ENCODE measurements at regions of chr1 and their contacts with region 1.

Region 1: GRCh38 chr1:155934097-155934935 is at the start of gene KHDC4:
- DNase-seq: peak; percentile 99
- ATAC-seq: peak; percentile 92
- H3K4me3 ChIP-seq: peak within 1 kb of the TSS; percentile 99
- H3K27ac ChIP-seq: peak within 1 kb of the TSS; percentile 87
- H3K4me1 ChIP-seq: peaks cover 13% of the 10 kb centered on the region
- H3K27me3 ChIP-seq: no peaks in the 10 kb centered on the region
- CTCF ChIP-seq: 0 out of 6 replicates have a peak, but pooled peaks of 1 of the 3 experiments have one; percentile 15
- EP300 ChIP-seq: no peak
- POLR2A ChIP-seq: peak; percentile 100
- RAD21 ChIP-seq: 0 out of 2 replicates have a peak, but pooled peaks have one; percentile 8
- polyA plus RNA-seq, gene KHDC4: 11.7 to 15.1 TPM

Region 2: GRCh38 chr1:155946633-155947219 is 12.4 kb after region 1 on chr1:
- CTCF ChIA-PET with region 1: interaction called, 12 read pairs
- POLR2A ChIA-PET with region 1: interaction called, 28 read pairs
- RAD21 ChIA-PET with region 1: interaction called, 10 read pairs
- SMC1A ChIA-PET with region 1: interaction called, 10 read pairs
- in situ Hi-C with region 1: no loop called
- intact Hi-C with region 1: no loop called
- DNase-seq: no peak
- ATAC-seq: peak; percentile 49
- H3K4me3 ChIP-seq: peak overlapping the region; percentile 12
- H3K27ac ChIP-seq: peak overlapping the region; percentile 79
- H3K4me1 ChIP-seq: peaks cover 50% of the 10 kb centered on the region
- H3K27me3 ChIP-seq: no peaks in the 10 kb centered on the region
- CTCF ChIP-seq: no peak
- EP300 ChIP-seq: no peak; a peak in 1 of 4 replicates
- POLR2A ChIP-seq: no peak
- RAD21 ChIP-seq: no peak

Region 3: GRCh38 chr1:155978325-155978972 is 44.1 kb after region 1 on chr1 and contains the start of gene ARHGEF2:
- CTCF ChIA-PET with region 1: interaction called, 227 read pairs
- POLR2A ChIA-PET with region 1: interaction called, 273 read pairs
- RAD21 ChIA-PET with region 1: interaction called, 214 read pairs
- SMC1A ChIA-PET with region 1: interaction called, 229 read pairs
- in situ Hi-C with region 1: no loop called
- intact Hi-C with region 1: loop called (anchors 2 kb)
- DNase-seq: no peak
- ATAC-seq: peak; percentile 78
- H3K4me3 ChIP-seq: peak within 1 kb of the TSS; percentile 100
- H3K27ac ChIP-seq: peak within 1 kb of the TSS; percentile 97
- H3K4me1 ChIP-seq: peaks cover 28% of the 10 kb centered on the region
- H3K27me3 ChIP-seq: no peaks in the 10 kb centered on the region
- CTCF ChIP-seq: peak in 2 of 3 experiments; percentile 19 to 27; a peak in 4 of 6 replicates
- EP300 ChIP-seq: no peak
- POLR2A ChIP-seq: peak; percentile 91
- RAD21 ChIP-seq: no peak
- polyA plus RNA-seq, gene ARHGEF2: 8.1 to 10.6 TPM

Region 4: DNA sequence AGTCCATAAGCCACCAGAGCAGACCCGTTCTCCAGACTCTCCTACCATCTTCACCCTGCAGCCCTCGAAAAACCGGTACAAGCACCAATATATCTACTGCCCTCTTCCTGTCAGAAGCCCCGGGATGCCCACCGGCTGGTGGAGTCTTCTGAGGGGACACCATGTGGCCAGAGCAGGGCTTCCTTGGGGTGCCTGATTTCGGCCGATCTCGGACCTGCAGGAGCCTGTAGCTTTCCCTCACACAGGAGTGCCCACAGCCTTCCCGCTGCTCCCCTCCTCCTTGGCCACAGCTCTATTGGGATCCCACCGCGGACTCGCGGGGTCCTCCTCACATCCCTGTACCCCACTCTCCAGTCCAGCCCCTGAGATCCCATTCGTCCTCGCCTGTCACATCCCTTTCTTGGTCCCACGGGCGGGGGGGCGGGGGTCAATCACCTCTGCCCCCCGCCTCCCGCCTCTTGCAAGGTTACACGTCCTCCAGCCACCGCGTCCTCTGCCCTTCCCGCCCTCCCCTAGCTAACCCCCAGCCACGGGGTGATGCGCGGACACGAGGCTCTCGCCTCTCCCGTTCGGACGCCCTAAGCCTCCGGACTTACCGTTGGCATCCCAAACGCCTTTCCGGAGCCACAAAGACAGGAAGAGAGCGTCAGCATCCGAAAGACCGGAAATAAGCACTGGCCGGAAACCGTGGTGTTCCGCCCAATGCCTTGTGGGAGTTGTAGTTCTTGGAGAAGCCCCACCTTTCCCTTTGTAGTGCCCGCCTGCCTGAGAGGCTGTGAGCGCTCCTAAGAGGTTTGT is 86.2 kb after region 1 on chr1 and contains the start of gene SSR2:
- CTCF ChIA-PET with region 1: interaction called, 14 read pairs
- POLR2A ChIA-PET with region 1: interaction called, 4 read pairs
- RAD21 ChIA-PET with region 1: interaction called, 3 read pairs
- SMC1A ChIA-PET with region 1: interaction called, 9 read pairs
- in situ Hi-C with region 1: no loop called
- intact Hi-C with region 1: no loop called
- DNase-seq: peak; percentile 76
- ATAC-seq: peak; percentile 100
- H3K4me3 ChIP-seq: peak within 1 kb of the TSS; percentile 92
- H3K27ac ChIP-seq: peak within 1 kb of the TSS; percentile 78
- H3K4me1 ChIP-seq: peaks cover 6% of the 10 kb centered on the region
- H3K27me3 ChIP-seq: no peaks in the 10 kb centered on the region; a peak in 1 of 4 replicates
- CTCF ChIP-seq: 0 out of 6 replicates have a peak, but pooled peaks of 1 of the 3 experiments have one; percentile 9
- EP300 ChIP-seq: no peak
- POLR2A ChIP-seq: peak; percentile 91
- RAD21 ChIP-seq: no peak
- polyA plus RNA-seq, gene SSR2: 395 to 407 TPM

Region 5: DNA sequence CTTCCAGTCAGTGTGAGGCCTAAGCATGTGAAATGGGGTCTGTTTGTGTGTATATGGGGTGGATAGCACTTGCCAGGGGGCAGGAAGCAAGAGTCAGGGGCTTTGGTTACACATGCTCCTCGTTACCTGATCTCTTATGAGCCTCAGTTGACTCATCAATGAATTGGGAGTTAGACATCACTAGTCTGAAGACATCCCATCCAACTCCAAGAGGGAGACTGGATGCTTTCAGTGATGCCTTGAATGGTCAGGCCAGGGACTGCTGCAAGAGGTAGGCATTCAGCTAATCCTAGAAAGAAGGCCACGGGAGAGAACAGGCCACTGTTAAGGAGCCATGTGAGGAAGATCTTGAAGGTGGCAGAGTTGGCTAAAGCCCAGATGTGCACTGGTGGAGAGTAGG is 132.9 kb after region 1 on chr1:
- CTCF ChIA-PET with region 1: interaction called, 102 read pairs
- POLR2A ChIA-PET with region 1: interaction called, 8 read pairs
- RAD21 ChIA-PET with region 1: interaction called, 68 read pairs
- SMC1A ChIA-PET with region 1: interaction called, 69 read pairs
- in situ Hi-C with region 1: loop called (anchors 5 kb)
- intact Hi-C with region 1: loop called (anchors 2 kb)
- DNase-seq: no peak
- ATAC-seq: no peak
- H3K4me3 ChIP-seq: no peak overlapping the region
- H3K27ac ChIP-seq: no peak overlapping the region
- H3K4me1 ChIP-seq: no peaks in the 10 kb centered on the region
- H3K27me3 ChIP-seq: no peaks in the 10 kb centered on the region
- CTCF ChIP-seq: no peak
- EP300 ChIP-seq: no peak
- POLR2A ChIP-seq: no peak
- RAD21 ChIP-seq: no peak